GM23248 (cell line): ENCODE measurements at regions of chr4 and their contacts with region 1.

Region 1: GRCh38 chr4:8241895-8242696 is 27.5 kb upstream of the HTRA3 start:
- DNase-seq: peak; percentile 96
- H3K4me3 ChIP-seq: no peak overlapping the region
- H3K27ac ChIP-seq: no peak overlapping the region
- H3K4me1 ChIP-seq: no peaks in the 10 kb centered on the region
- H3K27me3 ChIP-seq: no peaks in the 10 kb centered on the region

Region 2: GRCh38 chr4:7960790-7961655 is 281.1 kb before region 1 on chr4:
- in situ Hi-C with region 1: no loop called
- DNase-seq: peak; percentile 98
- H3K4me3 ChIP-seq: no peak overlapping the region
- H3K27ac ChIP-seq: peak overlapping the region; percentile 90
- H3K4me1 ChIP-seq: peaks cover 27% of the 10 kb centered on the region
- H3K27me3 ChIP-seq: no peaks in the 10 kb centered on the region

Region 3: GRCh38 chr4:8607603-8608481 is 365.7 kb after region 1 on chr4:
- in situ Hi-C with region 1: loop called (anchors 25 kb)
- DNase-seq: peak; percentile 38
- H3K4me3 ChIP-seq: no peak overlapping the region
- H3K27ac ChIP-seq: no peak overlapping the region
- H3K4me1 ChIP-seq: no peaks in the 10 kb centered on the region
- H3K27me3 ChIP-seq: no peaks in the 10 kb centered on the region